ENCODE measurements at regions of chr15 and their contacts with region 1.

Region 1: GRCh38 chr15:95025924-95026728 is 794.8 kb downstream of the MCTP2 start:
- DNase-seq: peak; percentile 72
- ATAC-seq: peak; percentile 95
- H3K4me3 Mint-ChIP-seq: no peak overlapping the region
- H3K27ac Mint-ChIP-seq: no peak overlapping the region
- H3K4me1 Mint-ChIP-seq: no peaks in the 10 kb centered on the region
- H3K27me3 Mint-ChIP-seq: no peaks in the 10 kb centered on the region
- CTCF ChIP-seq: peak; percentile 35; the same call in 1 of the 2 replicates

Region 2: GRCh38 chr15:95259513-95259912 is 233.4 kb after region 1 on chr15:
- CTCF ChIA-PET with region 1: interaction called, 13 read pairs
- POLR2A ChIA-PET with region 1: no interaction called
- DNase-seq: peak; percentile 61
- ATAC-seq: peak; percentile 82
- H3K4me3 Mint-ChIP-seq: no peak overlapping the region
- H3K27ac Mint-ChIP-seq: no peak overlapping the region
- H3K4me1 Mint-ChIP-seq: peaks cover 18% of the 10 kb centered on the region
- H3K27me3 Mint-ChIP-seq: no peaks in the 10 kb centered on the region; the same call in 1 of the 2 replicates
- CTCF ChIP-seq: peak; percentile 61

Measured in WTC11 (cell line).